ENCODE measurements at regions of chr16 and their contacts with region 1.

Region 1: GRCh38 chr16:27859020-27859419 is 204.5 kb downstream of the GSG1L start:
- DNase-seq: peak; percentile 66
- ATAC-seq: peak; percentile 92
- H3K4me3 Mint-ChIP-seq: no peak overlapping the region
- H3K27ac Mint-ChIP-seq: no peak overlapping the region
- H3K4me1 Mint-ChIP-seq: no peaks in the 10 kb centered on the region
- H3K27me3 Mint-ChIP-seq: no peaks in the 10 kb centered on the region; the same call in none of the 2 replicates
- CTCF ChIP-seq: peak; percentile 40; the same call in 1 of the 2 replicates

Region 2: DNA sequence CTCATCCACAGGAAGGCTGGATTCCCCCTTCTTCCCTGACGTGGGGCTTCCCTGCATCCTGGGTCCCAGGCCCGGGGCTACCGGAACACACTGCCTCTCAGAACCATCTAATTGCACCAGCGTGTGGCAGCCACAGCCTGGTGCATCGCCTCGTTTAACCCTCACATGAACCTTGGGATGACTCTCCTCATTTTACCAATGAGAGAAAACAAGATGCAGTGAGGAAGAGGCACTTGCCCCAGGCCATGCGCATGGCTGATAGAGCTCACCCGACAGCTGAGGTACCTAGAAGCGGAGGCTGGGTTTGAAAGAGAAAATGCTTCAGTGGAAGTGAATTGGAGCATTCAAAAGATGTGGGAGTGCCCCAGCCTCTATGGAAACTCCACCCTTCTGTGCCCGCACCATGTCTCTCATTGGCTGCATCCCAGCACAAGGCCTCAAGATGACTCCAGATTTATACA is 146.7 kb before region 1 on chr16:
- CTCF ChIA-PET with region 1: no interaction called
- POLR2A ChIA-PET with region 1: no interaction called
- DNase-seq: no peak
- ATAC-seq: peak; percentile 81
- H3K4me3 Mint-ChIP-seq: no peak overlapping the region
- H3K27ac Mint-ChIP-seq: peak overlapping the region; percentile 61; the same call in 1 of the 2 replicates
- H3K4me1 Mint-ChIP-seq: peaks cover 5% of the 10 kb centered on the region
- H3K27me3 Mint-ChIP-seq: no peaks in the 10 kb centered on the region
- CTCF ChIP-seq: no peak

Region 3: DNA sequence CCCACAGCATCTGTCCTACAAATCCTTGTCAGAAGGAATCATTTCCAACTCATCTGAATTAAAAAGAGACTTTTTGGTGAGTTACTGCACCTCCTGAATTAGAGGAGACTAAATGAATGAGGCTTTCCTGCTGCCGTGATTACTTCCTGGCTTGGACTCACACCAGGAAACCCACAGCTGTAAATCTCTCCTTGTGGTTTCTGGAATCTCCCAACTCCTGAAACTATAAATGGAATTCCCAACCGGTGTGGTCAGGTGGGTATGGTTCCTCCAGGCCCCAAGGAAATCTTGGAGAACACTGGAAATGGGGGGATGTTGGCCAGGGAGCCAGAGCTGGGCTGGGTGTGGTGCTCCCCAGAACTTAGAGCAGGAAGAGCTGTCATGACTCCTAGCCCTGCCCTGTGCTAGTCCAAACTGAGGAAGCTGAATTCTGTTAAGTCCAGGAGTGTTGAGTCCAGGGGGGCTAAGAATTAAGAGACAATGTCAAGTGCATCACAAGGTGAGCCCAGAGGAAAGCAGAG is 11.9 kb before region 1 on chr16:
- CTCF ChIA-PET with region 1: interaction called, 25 read pairs
- POLR2A ChIA-PET with region 1: interaction called, 4 read pairs
- DNase-seq: no peak
- ATAC-seq: no peak
- H3K4me3 Mint-ChIP-seq: no peak overlapping the region
- H3K27ac Mint-ChIP-seq: 0 out of 2 replicates have a peak overlapping the region, but pooled peaks have one; percentile 67
- H3K4me1 Mint-ChIP-seq: peaks cover 36% of the 10 kb centered on the region
- H3K27me3 Mint-ChIP-seq: no peaks in the 10 kb centered on the region
- CTCF ChIP-seq: no peak

Measured in WTC11 (cell line).